CD8-positive, alpha-beta T cell (primary cell): ENCODE measurements at regions of chr9 and their contacts with region 1.

Region 1: DNA sequence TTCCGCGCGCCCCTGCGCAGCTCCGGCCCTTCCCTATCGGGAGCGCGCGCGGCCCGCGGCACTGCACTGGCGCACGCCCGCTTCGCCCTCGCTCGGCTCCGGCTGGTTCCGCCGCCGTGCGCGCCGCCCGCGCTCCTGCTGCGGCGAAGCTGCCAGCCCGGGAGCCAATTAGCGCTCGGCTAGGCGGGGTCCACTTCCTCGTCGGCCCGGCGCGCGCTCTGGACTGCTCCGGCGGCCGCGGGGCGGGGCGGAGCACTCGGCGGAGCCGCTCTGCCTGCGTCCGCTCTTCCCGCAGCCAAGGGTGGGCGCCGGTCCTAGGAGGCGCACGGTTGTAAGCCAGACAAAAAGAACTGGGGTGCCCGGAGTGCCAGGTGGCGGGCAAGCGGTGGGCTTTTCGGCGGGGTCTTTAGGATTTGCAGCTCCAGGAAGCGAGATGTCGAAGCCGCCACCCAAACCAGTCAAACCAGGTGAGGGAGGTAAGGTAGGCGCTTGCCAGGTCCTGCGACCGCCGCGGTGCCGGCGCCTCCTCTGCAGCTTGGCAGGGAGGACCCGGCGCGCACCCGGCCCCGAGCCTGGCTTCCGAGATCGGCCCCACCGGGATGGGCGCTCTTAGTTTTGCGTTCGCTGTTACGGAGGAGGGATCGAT is at the start of gene OSTF1:
- DNase-seq: peak; percentile 85 to 98 (median 92)
- ATAC-seq: peak; percentile 78
- H3K4me3 ChIP-seq: peak within 1 kb of the TSS; percentile 92 to 98
- H3K4me3 Mint-ChIP-seq: peak within 1 kb of the TSS; percentile 98
- H3K27ac ChIP-seq: peak within 1 kb of the TSS; percentile 89 to 95
- H3K27ac Mint-ChIP-seq: peak within 1 kb of the TSS; percentile 97
- H3K4me1 ChIP-seq: peaks cover 52% of the 10 kb centered on the region
- H3K4me1 Mint-ChIP-seq: peaks cover 74% of the 10 kb centered on the region
- H3K27me3 ChIP-seq: no peaks in the 10 kb centered on the region
- H3K27me3 Mint-ChIP-seq: no peaks in the 10 kb centered on the region
- CTCF ChIP-seq: no peak
- total RNA-seq, gene OSTF1: 29.1 to 30.3 TPM

Region 2: GRCh38 chr9:73132034-73132776 is 1956.2 kb before region 1 on chr9:
- CTCF ChIA-PET with region 1: no interaction called
- POLR2A ChIA-PET with region 1: no interaction called
- intact Hi-C with region 1: loop called in 1 of 2 experiments (anchors 5 kb)
- DNase-seq: peak; percentile 51 to 92 (median 72)
- ATAC-seq: peak; percentile 90
- H3K4me3 ChIP-seq: peak overlapping the region; percentile 57 to 65
- H3K4me3 Mint-ChIP-seq: peak overlapping the region; percentile 87
- H3K27ac ChIP-seq: peak overlapping the region; percentile 87 to 94
- H3K27ac Mint-ChIP-seq: peak overlapping the region; percentile 95
- H3K4me1 ChIP-seq: peaks cover 7% of the 10 kb centered on the region
- H3K4me1 Mint-ChIP-seq: peaks cover 25% of the 10 kb centered on the region
- H3K27me3 ChIP-seq: no peaks in the 10 kb centered on the region
- H3K27me3 Mint-ChIP-seq: no peaks in the 10 kb centered on the region
- CTCF ChIP-seq: no peak

Region 3: DNA sequence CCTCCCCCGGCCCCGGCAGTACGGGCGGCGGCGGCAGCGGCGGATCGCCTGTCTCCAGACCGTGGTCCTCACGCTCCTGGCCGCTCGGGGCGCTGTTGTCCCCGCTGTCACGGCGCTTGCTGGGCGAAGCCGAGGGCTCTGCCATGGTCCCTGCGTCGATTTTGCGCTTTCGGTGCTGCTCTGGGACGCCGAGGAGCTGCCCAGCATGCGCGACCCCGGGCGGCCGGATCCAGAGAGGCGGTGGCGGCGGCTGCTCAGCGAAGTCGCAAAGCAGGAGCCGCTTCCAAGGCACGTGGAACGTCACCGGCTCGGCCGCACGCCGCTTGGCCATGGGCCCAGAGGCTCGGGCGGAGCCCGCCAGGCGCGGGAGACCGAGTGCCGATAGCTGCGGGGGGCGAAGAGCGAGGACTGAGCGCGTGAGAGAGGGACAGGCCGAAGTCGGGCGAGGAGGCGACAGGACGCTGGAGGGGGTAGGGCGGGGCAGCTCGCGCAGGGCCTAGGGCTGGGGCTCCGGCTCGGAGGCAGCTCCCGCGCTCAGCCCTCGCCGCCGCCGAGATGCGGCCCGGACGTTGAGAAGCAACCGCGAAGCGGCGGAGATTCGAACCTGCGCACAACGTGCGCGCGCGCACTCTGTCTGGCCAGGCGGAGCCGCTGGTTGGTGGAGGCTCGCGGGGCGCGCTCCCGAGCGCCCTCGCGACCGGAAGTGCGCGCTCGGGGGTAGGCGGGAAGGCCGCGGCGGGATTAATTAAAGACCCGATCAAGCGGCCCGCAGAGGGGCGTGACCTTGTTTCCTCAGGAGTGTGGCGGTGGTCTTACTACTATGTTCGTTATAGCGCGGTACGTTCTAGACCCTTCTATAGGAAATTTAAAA is 135.9 kb before region 1 on chr9 and contains the start of gene C9orf40:
- CTCF ChIA-PET with region 1: interaction called, 3 read pairs
- POLR2A ChIA-PET with region 1: interaction called, 24 read pairs
- intact Hi-C with region 1: loop called (anchors 1 kb)
- DNase-seq: peak; percentile 81 to 93 (median 92)
- ATAC-seq: peak; percentile 88
- H3K4me3 ChIP-seq: peak within 1 kb of the TSS; percentile 86 to 99
- H3K4me3 Mint-ChIP-seq: peak within 1 kb of the TSS; percentile 98
- H3K27ac ChIP-seq: peak within 1 kb of the TSS; percentile 87 to 95
- H3K27ac Mint-ChIP-seq: peak within 1 kb of the TSS; percentile 94
- H3K4me1 ChIP-seq: no peaks in the 10 kb centered on the region
- H3K4me1 Mint-ChIP-seq: peaks cover 20% of the 10 kb centered on the region
- H3K27me3 ChIP-seq: no peaks in the 10 kb centered on the region
- H3K27me3 Mint-ChIP-seq: no peaks in the 10 kb centered on the region
- CTCF ChIP-seq: peak; percentile 77
- total RNA-seq, gene C9orf40: 1.5 to 2.3 TPM

Region 4: DNA sequence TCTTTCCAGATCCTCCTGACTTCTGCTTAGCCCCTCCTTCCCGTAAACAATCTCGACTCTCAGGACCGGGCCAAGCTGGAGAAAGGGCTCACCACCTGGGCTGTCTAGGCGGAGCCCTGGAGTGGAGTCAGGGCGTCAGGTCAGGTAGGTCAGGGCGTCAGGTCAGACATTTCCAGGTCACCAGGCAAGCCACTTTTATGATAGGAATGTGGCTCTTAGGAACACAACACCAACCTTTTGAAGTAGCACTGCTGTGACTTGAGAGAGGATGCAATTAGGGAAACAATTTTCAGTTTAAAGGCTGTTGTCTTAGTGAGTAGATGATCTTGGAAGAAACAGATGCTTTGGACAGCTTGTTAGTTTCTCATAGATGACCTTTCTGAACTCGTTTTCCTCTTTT is 12.7 kb after region 1 on chr9:
- CTCF ChIA-PET with region 1: interaction called, 6 read pairs
- POLR2A ChIA-PET with region 1: interaction called, 10 read pairs
- intact Hi-C with region 1: loop called in 1 of 2 experiments (anchors 2 kb)
- DNase-seq: no peak
- ATAC-seq: no peak
- H3K4me3 ChIP-seq: no peak overlapping the region
- H3K4me3 Mint-ChIP-seq: no peak overlapping the region
- H3K27ac ChIP-seq: peak overlapping the region in 1 of 2 experiments; percentile 14
- H3K27ac Mint-ChIP-seq: peak overlapping the region; percentile 79
- H3K4me1 ChIP-seq: peaks cover 26% of the 10 kb centered on the region
- H3K4me1 Mint-ChIP-seq: peaks cover 80% of the 10 kb centered on the region
- H3K27me3 ChIP-seq: no peaks in the 10 kb centered on the region
- H3K27me3 Mint-ChIP-seq: no peaks in the 10 kb centered on the region
- CTCF ChIP-seq: no peak

Region 5: GRCh38 chr9:75142202-75142601 is 53.8 kb after region 1 on chr9:
- CTCF ChIA-PET with region 1: interaction called, 11 read pairs
- POLR2A ChIA-PET with region 1: interaction called, 18 read pairs
- intact Hi-C with region 1: loop called (anchors 1 to 5 kb)
- DNase-seq: peak in 2 of 9 experiments; percentile 50 to 58
- ATAC-seq: peak; percentile 14
- H3K4me3 ChIP-seq: no peak overlapping the region
- H3K4me3 Mint-ChIP-seq: peak overlapping the region; percentile 35
- H3K27ac ChIP-seq: peak overlapping the region in 1 of 2 experiments; percentile 70
- H3K27ac Mint-ChIP-seq: peak overlapping the region; percentile 86
- H3K4me1 ChIP-seq: peaks cover 59% of the 10 kb centered on the region
- H3K4me1 Mint-ChIP-seq: peaks cover 85% of the 10 kb centered on the region
- H3K27me3 ChIP-seq: no peaks in the 10 kb centered on the region
- H3K27me3 Mint-ChIP-seq: no peaks in the 10 kb centered on the region
- CTCF ChIP-seq: no peak

Region 6: GRCh38 chr9:75185585-75186170 is 97.3 kb after region 1 on chr9:
- CTCF ChIA-PET with region 1: interaction called, 8 read pairs
- POLR2A ChIA-PET with region 1: interaction called, 3 read pairs
- intact Hi-C with region 1: loop called (anchors 2 to 5 kb)
- DNase-seq: peak; percentile 3 to 63 (median 44)
- ATAC-seq: peak; percentile 66
- H3K4me3 ChIP-seq: no peak overlapping the region
- H3K4me3 Mint-ChIP-seq: no peak overlapping the region
- H3K27ac ChIP-seq: no peak overlapping the region
- H3K27ac Mint-ChIP-seq: no peak overlapping the region
- H3K4me1 ChIP-seq: peaks cover 10% of the 10 kb centered on the region
- H3K4me1 Mint-ChIP-seq: peaks cover 19% of the 10 kb centered on the region
- H3K27me3 ChIP-seq: no peaks in the 10 kb centered on the region
- H3K27me3 Mint-ChIP-seq: no peaks in the 10 kb centered on the region
- CTCF ChIP-seq: peak; percentile 69